ENCODE measurements at regions of chr1 and their contacts with region 1.

Region 1: DNA sequence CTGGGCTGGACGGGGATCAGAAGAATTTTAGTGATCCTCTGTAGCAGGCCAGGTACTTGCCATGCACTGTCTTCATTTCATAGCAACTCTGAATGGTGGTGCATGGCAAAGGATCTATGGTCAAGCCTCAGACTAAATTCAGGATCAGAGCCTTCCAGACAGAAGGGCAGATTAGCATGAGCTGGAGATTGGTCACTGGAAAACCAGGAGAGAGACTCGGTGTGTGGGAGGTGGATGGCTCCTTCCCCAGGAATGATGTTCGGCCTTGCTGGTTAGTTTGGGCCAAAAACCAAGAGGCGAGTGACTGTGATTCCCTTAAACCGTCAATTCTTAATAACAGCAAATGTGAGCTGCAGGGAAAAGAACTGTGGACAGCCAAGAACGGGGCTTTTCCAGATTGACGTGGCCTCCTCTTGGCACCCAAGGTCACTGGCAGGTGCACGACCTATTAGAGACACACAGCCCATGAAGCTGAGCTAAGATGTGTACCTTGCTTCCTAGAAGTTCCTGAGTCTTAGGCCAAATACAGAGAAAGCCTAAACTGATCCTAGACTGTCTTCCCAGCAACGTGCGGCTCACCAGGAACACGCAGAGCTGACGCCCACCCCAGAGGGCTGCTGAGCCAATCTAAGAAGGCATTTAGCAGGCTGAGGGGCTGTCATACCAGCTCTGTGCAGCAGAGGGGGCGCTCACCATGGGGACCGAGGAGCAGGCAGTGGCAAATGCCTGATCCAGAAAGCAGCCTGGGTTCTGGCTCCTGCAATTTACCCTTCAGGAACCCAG is 18.5 kb downstream of the ALDH4A1 start:
- DNase-seq: peak; percentile 78
- H3K4me3 ChIP-seq: no peak overlapping the region
- H3K27ac ChIP-seq: no peak overlapping the region
- H3K4me1 ChIP-seq: no peaks in the 10 kb centered on the region
- H3K27me3 ChIP-seq: no peaks in the 10 kb centered on the region
- CTCF ChIP-seq: peak; percentile 81 to 95
- POLR2A ChIP-seq: no peak

Region 2: GRCh38 chr1:17674716-17675500 is 1208.9 kb before region 1 on chr1:
- CTCF ChIA-PET with region 1: no interaction called
- POLR2A ChIA-PET with region 1: no interaction called
- dilution Hi-C with region 1: no loop called
- intact Hi-C with region 1: no loop called
- DNase-seq: no peak
- H3K4me3 ChIP-seq: no peak overlapping the region
- H3K27ac ChIP-seq: no peak overlapping the region
- H3K4me1 ChIP-seq: no peaks in the 10 kb centered on the region
- H3K27me3 ChIP-seq: no peaks in the 10 kb centered on the region
- CTCF ChIP-seq: no peak
- POLR2A ChIP-seq: no peak

Region 3: DNA sequence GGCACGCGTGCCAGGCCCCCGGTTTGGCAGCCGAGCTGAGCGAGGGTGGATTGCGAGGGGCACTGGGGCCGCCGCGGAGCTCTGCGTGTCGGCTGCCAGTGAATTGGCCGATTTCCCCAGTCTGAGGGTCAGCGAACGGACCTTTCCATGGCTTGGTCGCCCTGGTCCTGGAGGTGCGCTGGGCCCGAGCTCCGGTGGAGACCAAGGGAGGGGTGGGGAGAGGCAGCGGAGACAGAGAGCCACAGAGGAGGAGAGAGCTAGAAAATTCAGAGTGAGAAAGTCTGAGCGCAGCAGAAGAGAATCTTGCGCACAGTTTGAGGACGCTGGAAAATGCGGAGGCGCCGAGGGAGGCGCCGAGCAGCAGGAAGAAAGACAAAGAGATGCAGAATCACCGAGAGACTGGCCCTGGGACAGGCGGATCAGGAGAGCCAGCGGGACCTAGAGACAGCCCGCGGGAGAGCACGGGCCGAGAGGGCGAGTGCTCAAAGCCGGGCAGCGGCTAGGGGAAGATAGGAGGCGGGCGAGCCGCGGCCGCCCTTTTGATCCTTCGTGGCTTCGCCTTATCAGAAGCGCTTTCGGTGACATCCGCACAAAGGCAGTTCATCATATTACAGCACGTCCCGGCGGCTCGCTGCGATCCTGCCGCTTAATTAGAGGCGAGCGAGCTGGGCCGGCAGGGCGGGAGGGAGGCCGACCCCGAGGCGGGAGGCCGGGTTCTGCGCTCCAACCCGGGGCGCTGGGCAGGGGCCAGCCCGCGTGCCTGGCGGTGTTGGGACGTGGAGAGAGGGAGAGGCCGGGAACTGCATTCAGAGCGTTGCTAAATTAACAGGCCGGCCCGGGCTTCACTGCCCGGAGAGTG is 240.4 kb before region 1 on chr1:
- CTCF ChIA-PET with region 1: no interaction called
- POLR2A ChIA-PET with region 1: no interaction called
- dilution Hi-C with region 1: no loop called
- intact Hi-C with region 1: no loop called
- DNase-seq: no peak
- H3K4me3 ChIP-seq: no peak overlapping the region
- H3K27ac ChIP-seq: no peak overlapping the region
- H3K4me1 ChIP-seq: no peaks in the 10 kb centered on the region
- H3K27me3 ChIP-seq: peaks cover 85 to 93% of the 10 kb centered on the region in 2 experiments
- CTCF ChIP-seq: no peak
- POLR2A ChIP-seq: no peak

Region 4: DNA sequence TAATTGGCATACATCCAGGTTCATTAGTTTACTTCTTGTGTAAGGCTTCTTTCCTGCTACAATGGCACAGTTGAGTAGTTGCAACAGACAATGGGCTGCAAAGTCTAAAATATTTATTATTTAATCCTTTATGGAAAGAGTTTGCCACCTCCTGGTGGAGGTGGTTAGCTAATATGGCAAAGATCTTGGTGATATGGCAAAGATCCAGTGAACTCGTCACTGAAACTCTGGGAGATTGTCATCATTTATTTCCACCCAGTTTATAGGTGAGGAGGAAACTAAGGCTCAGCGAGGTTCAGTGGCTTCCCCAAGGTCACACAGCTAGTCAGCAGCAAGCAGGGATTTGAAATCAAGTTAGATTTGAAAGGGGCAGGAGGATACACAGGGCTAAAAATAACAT is 88.7 kb after region 1 on chr1:
- CTCF ChIA-PET with region 1: interaction called, 29 read pairs
- POLR2A ChIA-PET with region 1: no interaction called
- dilution Hi-C with region 1: no loop called
- intact Hi-C with region 1: loop called (anchors 1 kb)
- DNase-seq: peak; percentile 60
- H3K4me3 ChIP-seq: no peak overlapping the region
- H3K27ac ChIP-seq: peak overlapping the region; percentile 19
- H3K4me1 ChIP-seq: peaks cover 15% of the 10 kb centered on the region
- H3K27me3 ChIP-seq: no peaks in the 10 kb centered on the region
- CTCF ChIP-seq: peak in 1 of 2 donors; percentile 21
- POLR2A ChIP-seq: no peak

Region 5: DNA sequence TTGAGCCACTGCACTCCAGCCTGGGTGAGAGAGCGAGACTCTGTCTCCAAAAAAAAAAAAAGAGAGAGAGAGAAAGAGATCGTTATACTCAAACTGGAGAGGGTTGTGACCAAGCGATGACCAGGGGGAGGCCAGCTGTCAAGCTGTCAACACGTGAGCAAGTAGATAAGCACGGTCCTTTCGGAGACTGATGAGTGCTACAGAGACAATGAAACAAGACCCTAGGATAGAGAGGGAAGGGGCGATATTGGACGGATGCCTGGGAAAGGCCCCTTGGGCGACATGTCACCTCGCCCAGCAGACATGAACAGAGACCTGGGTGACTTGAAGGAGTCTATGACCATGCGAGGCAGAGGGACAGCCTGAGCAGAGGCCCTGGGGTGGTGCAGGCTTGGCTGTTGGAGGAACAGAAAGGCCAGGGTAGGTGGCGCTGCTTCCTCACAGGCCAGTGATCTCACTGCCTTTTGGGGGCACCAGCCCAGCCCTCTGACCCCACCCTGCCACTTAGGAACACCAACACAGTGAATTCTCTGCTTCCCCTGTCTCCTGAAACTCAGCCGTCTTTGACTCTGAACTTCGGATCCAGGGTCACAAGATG is 173.5 kb after region 1 on chr1:
- CTCF ChIA-PET with region 1: no interaction called
- POLR2A ChIA-PET with region 1: no interaction called
- dilution Hi-C with region 1: no loop called
- intact Hi-C with region 1: no loop called
- DNase-seq: no peak
- H3K4me3 ChIP-seq: no peak overlapping the region
- H3K27ac ChIP-seq: no peak overlapping the region
- H3K4me1 ChIP-seq: no peaks in the 10 kb centered on the region
- H3K27me3 ChIP-seq: peaks cover 6 to 9% of the 10 kb centered on the region in 2 experiments
- CTCF ChIP-seq: no peak
- POLR2A ChIP-seq: no peak

Region 6: GRCh38 chr1:19074902-19075721 is 191.3 kb after region 1 on chr1:
- CTCF ChIA-PET with region 1: interaction called, 15 read pairs
- POLR2A ChIA-PET with region 1: no interaction called
- dilution Hi-C with region 1: no loop called
- intact Hi-C with region 1: no loop called
- DNase-seq: no peak
- H3K4me3 ChIP-seq: no peak overlapping the region
- H3K27ac ChIP-seq: no peak overlapping the region
- H3K4me1 ChIP-seq: no peaks in the 10 kb centered on the region
- H3K27me3 ChIP-seq: no peaks in the 10 kb centered on the region
- CTCF ChIP-seq: no peak
- POLR2A ChIP-seq: no peak

Region 7: GRCh38 chr1:19081218-19081893 is 197.5 kb after region 1 on chr1:
- CTCF ChIA-PET with region 1: interaction called, 22 read pairs
- POLR2A ChIA-PET with region 1: no interaction called
- dilution Hi-C with region 1: no loop called
- intact Hi-C with region 1: loop called (anchors 1 kb)
- DNase-seq: peak; percentile 52
- H3K4me3 ChIP-seq: no peak overlapping the region
- H3K27ac ChIP-seq: peak overlapping the region; percentile 84
- H3K4me1 ChIP-seq: peaks cover 42% of the 10 kb centered on the region
- H3K27me3 ChIP-seq: no peaks in the 10 kb centered on the region
- CTCF ChIP-seq: no peak
- POLR2A ChIP-seq: no peak

Region 8: DNA sequence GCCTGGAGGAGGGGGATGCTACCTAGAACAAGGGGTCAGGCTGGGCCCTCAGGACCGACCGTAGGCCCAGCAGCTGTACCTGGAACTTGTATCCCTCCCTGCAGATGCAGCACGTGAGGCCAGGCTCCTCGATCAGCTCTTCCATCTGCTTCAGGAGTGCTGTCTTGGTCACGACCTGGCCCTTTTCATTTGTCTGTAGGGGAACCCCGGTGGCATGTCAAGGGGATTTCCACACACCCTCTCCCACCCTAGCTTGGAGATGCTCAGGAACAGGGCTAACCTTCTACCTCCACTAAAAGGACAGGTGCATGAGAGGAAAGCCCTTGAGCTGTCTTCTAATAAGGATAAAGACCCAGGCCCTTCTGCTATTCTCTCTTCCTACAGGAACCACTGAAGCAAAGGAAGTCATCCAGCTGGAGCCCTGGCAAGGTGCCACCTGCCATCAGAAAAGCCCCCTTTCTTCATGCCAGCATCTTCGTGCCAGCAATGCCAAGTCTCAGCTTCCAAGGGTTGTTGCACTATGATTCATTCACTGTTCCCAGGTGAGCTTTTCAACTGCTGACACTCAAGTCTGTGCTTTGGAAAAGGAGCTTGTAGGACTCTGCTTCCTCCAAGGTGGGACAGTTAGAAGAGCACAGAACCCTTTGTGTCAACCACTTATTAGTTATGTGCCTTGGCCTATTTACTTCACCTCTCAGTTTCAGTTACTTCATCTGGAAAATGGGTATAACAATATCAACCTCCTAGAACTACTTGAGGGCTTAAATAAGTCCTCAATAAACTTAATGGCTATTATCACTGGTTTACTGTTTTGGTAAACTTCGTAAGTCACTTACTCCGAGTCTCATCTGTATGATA is 204.1 kb after region 1 on chr1:
- CTCF ChIA-PET with region 1: interaction called, 114 read pairs
- POLR2A ChIA-PET with region 1: no interaction called
- dilution Hi-C with region 1: no loop called
- intact Hi-C with region 1: loop called (anchors 1 kb)
- DNase-seq: no peak
- H3K4me3 ChIP-seq: no peak overlapping the region
- H3K27ac ChIP-seq: no peak overlapping the region
- H3K4me1 ChIP-seq: peaks cover 15% of the 10 kb centered on the region
- H3K27me3 ChIP-seq: no peaks in the 10 kb centered on the region
- CTCF ChIP-seq: no peak
- POLR2A ChIP-seq: no peak

Region 9: GRCh38 chr1:19096036-19096833 is 212.4 kb after region 1 on chr1:
- CTCF ChIA-PET with region 1: interaction called, 114 read pairs
- POLR2A ChIA-PET with region 1: no interaction called
- dilution Hi-C with region 1: no loop called
- intact Hi-C with region 1: loop called (anchors 1 kb)
- DNase-seq: peak; percentile 55
- H3K4me3 ChIP-seq: no peak overlapping the region
- H3K27ac ChIP-seq: no peak overlapping the region
- H3K4me1 ChIP-seq: no peaks in the 10 kb centered on the region
- H3K27me3 ChIP-seq: no peaks in the 10 kb centered on the region
- CTCF ChIP-seq: peak; percentile 41 to 68
- POLR2A ChIP-seq: no peak

Region 10: GRCh38 chr1:19113697-19114092 is 229.9 kb after region 1 on chr1:
- CTCF ChIA-PET with region 1: interaction called, 40 read pairs
- POLR2A ChIA-PET with region 1: no interaction called
- dilution Hi-C with region 1: no loop called
- intact Hi-C with region 1: loop called (anchors 1 kb)
- DNase-seq: peak; percentile 34
- H3K4me3 ChIP-seq: no peak overlapping the region
- H3K27ac ChIP-seq: no peak overlapping the region
- H3K4me1 ChIP-seq: no peaks in the 10 kb centered on the region
- H3K27me3 ChIP-seq: no peaks in the 10 kb centered on the region
- CTCF ChIP-seq: peak; percentile 42 to 60
- POLR2A ChIP-seq: no peak